Cardiac septum (tissue), 1 donor: ENCODE measurements at regions of chr14 and their contacts with region 1.

Region 1: DNA sequence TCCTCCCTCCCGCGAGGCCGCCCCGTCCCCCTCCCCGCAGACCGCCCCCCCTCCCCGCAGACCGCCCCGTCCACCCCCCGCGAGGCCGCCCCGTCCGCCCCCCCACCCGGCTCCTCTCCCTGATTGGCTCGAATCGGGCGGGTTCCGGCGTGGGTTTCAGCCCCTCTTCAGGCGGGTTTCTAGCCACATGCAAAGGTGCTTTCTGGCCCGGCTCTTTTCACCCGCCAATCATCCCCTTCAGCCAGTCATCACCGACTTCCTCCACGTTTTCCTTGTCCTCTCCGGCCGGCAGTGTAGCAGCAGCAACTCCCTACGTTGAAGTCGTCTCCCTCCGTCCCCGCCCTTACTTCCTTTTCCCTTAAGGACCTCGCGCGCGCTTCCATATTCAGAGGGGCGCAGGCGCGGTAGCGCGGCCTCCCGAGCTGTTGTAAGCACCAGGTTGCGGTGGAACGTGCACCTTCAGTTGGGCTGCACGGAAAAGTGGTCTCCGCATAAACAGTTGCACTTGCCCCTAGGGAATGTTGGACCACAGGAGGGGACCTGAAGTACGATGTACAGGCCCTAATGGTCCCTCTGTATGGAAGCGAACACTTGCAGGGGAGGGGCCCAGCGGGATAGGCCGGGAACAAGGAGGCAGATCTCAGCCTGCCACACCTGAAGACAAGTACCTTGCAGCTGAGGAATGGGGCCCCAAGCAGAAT is 44.6 kb upstream of the ESR2 start:
- DNase-seq: peak; percentile 95

Region 2: DNA sequence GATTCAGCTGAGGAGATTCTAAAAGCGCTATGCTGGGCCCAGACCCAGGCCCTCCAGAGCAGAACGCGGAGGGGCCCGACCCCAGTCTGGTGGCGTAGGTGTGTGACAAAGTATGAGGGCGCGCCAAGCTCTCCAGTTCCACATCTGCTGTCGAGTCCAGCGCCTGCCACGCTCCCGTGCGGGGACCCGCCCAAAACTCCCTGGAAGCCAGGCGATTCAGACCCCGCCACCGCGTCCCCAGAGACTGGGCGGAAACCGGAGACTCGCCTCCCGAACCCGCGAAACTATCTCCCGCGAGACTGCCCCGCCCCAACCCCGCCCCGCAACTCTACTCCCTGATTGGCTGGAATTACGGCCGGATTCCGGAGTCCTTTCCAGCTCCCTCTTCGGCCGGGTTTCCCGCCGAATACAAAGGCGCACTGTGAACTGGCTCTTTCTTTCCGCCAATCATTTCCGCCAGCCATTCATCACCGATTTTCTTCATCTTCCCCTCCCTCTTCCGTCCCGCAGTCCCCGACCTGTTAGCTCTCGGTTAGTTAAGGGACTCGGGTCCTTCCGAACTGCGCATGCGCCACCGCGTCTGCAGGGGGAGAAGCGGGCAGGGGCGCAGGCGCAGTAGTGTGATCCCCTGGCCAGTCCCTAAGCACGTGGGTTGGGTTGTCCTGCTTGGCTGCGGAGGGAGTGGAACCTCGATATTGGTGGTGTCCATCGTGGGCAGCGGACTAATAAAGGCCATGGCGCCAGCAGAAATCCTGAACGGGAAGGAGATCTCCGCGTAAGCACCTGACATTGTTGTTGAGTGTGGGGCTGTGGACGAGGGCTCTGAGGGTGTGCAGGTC is 49.1 kb after region 1 on chr14 and contains the start of gene MTHFD1:
- intact Hi-C with region 1: loop called (anchors 2 kb)
- DNase-seq: peak; percentile 98
- total RNA-seq, gene MTHFD1: 46.3 TPM

Region 3: GRCh38 chr14:64478634-64479250 is 140.0 kb after region 1 on chr14:
- intact Hi-C with region 1: loop called (anchors 5 kb)
- DNase-seq: no peak

Region 4: DNA sequence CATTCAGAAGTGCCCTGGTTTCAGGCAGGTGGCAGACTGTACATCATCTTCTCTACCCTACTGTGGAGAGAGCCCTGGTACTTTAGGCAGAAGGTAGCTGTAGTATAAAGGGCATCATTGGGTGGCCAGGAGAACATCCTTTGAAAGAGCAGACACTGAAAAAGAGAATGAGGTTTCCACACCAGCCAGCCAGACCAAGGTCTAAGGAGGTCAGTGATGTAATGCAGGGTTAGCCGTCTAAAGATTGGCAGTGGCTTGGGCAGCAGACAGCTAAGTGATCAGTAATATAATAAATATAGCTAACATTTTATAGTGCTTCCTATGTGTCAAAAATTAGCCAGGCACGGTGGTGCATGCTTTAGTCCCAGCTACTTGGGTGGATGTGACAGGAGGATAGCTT is 152.9 kb after region 1 on chr14:
- intact Hi-C with region 1: no loop called
- DNase-seq: no peak